Activated T-helper 2 cell treated with anti-CD3 and anti-CD28 coated beads, Interferon-gamma antibody, Interleukin-2, Interleukin-4, amounts not matched to agents 10 μg/mL and 5 μg/mL and 100 μg/mL, durations not matched to agents 14 hours and 24 hours and 36 hours (primary cell): ENCODE measurements at regions of chr10 and their contacts with region 1.

Region 1: GRCh38 chr10:8325024-8325980 is 270.8 kb downstream of the GATA3 start:
- DNase-seq: peak; percentile 42
- H3K4me3 Mint-ChIP-seq: peak overlapping the region; percentile 40
- H3K27ac Mint-ChIP-seq: peak overlapping the region; percentile 93
- H3K4me1 Mint-ChIP-seq: peaks cover 78% of the 10 kb centered on the region
- H3K27me3 Mint-ChIP-seq: no peaks in the 10 kb centered on the region

Region 2: GRCh38 chr10:8138471-8138870 is 186.8 kb before region 1 on chr10:
- intact Hi-C with region 1: loop called (anchors 2 kb)
- DNase-seq: no peak
- H3K4me3 Mint-ChIP-seq: peak overlapping the region; percentile 79
- H3K27ac Mint-ChIP-seq: peak overlapping the region; percentile 93
- H3K4me1 Mint-ChIP-seq: peaks cover 63% of the 10 kb centered on the region
- H3K27me3 Mint-ChIP-seq: no peaks in the 10 kb centered on the region

Region 3: DNA sequence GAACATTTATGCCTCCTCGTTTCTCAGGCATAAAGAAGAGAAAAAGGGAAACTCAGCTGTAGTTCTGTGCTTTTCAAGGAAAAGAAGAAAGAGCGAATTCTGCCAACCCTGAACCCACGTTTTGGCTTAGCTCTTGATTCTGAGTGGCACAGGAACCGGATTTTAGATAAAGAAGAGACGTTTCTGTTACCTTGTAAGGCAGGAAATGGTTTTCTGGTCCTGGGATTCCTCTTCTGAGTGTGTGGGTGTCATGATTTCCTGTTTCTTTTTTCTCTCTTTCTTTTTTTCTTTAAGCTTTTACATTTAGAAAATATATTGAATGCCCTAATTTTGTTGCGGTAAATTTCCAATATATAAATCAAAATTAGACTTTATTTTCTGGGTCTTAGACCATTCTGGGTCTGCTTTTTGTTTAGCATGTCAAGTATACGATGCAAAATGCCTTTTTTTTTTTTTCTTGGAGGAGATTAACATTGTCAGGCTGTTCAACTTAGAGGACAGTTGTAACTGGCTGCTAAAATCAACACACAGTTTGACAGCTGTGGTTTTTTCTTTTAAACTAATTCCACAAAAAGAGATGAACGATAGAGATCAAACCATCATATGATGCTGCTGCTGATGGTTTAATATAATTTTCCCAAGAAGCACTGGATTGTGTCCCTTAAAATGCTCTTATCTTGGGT is 80.0 kb before region 1 on chr10:
- intact Hi-C with region 1: loop called (anchors 1 kb)
- DNase-seq: no peak
- H3K4me3 Mint-ChIP-seq: peak overlapping the region; percentile 58
- H3K27ac Mint-ChIP-seq: peak overlapping the region; percentile 93
- H3K4me1 Mint-ChIP-seq: peaks cover 76% of the 10 kb centered on the region
- H3K27me3 Mint-ChIP-seq: no peaks in the 10 kb centered on the region

Region 4: DNA sequence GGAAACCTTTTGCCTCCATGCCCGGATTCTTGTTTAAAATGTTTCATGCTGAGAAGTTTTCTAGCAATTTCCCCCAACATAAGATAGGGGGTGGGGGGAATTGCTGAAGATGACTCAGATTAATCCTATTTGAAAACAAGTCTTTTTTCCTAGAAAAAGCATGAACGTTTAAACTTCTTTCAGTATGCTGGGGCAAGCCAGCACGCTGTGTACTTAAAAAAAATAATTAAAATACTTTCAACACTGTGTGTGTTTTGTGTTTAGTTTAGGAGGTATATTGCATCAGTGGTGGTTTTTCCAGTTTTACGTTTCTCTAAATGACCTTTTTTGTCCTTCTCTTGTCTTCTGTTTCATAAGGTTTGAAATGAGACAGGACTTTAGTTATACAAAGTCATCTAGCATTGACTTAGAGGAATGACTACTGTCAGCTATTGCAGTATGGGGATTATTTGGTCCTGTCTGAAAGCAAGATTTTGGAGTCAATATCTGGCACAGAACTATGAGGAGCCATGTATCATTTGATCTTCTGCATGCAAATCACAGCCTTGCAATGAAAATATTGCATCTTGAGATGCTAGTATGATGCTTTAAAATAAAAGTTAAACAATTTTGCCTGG is 25.2 kb after region 1 on chr10:
- intact Hi-C with region 1: loop called (anchors 1 kb)
- DNase-seq: no peak
- H3K4me3 Mint-ChIP-seq: peak overlapping the region; percentile 45
- H3K27ac Mint-ChIP-seq: peak overlapping the region; percentile 96
- H3K4me1 Mint-ChIP-seq: peaks cover 73% of the 10 kb centered on the region
- H3K27me3 Mint-ChIP-seq: no peaks in the 10 kb centered on the region

Region 5: DNA sequence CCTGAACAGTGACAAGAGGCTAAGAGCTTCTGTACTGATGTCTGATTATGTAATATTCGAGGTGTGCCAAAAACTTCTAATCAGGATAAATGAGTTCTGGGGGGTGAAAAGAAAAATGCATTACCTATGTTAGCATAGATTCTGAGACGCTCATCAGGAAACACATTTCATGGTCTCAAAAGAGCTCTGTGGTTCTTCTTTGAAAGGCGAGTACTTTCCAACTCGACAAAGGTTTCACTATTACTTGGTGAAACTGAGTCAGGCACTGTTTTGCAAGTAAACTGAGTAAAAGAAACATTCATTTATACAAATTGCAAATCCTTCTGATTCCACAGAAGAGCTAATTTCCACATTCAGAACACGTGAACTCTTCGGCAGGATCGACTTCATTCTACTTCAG is 252.4 kb after region 1 on chr10:
- intact Hi-C with region 1: loop called (anchors 5 kb)
- DNase-seq: no peak
- H3K4me3 Mint-ChIP-seq: no peak overlapping the region
- H3K27ac Mint-ChIP-seq: peak overlapping the region; percentile 89
- H3K4me1 Mint-ChIP-seq: peaks cover 69% of the 10 kb centered on the region
- H3K27me3 Mint-ChIP-seq: no peaks in the 10 kb centered on the region